PC-9 (cell line): ENCODE measurements at regions of chr9 and their contacts with region 1.

Region 1: DNA sequence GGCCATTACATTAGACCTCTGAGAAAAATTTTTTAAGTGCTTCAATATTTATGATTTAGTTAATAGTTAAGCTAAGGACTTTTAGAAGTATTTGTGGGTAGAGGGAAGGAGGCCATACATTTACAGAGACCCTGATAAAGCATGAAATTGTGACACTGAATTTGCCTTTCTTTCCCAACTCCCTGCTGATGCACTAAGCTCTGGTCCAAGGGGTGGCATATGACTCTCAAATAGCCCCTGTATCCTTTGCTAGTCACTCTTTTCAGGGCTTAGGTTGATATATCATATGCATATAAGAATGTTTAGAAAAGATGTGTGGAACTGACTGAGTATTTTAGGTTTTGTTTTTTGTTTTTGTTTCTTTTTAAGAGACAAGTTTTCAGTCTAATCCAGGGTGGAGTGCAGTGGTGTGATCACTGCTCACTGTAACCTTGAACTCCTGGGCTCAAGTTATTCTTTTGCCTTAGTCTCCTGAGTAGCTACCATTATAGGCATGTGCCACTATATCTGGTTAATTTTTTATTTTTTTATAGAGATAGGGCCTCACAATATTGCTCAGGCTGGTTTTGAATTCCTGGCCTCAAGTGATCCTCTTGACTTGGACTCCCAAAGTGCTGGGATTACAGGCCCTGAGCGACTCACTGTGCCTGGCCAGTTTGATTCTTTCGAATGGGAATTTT is 20.5 kb downstream of the KIAA1958 start:
- DNase-seq: no peak
- H3K4me3 ChIP-seq: no peak overlapping the region
- H3K27ac ChIP-seq: no peak overlapping the region
- H3K4me1 ChIP-seq: peaks cover 8% of the 10 kb centered on the region; the same call in 1 of the 2 replicates
- H3K27me3 ChIP-seq: no peaks in the 10 kb centered on the region
- CTCF ChIP-seq: no peak

Region 2: GRCh38 chr9:112694706-112695555 is 187.8 kb after region 1 on chr9:
- CTCF ChIA-PET with region 1: no interaction called
- POLR2A ChIA-PET with region 1: no interaction called
- intact Hi-C with region 1: no loop called
- DNase-seq: no peak
- H3K4me3 ChIP-seq: no peak overlapping the region
- H3K27ac ChIP-seq: no peak overlapping the region
- H3K4me1 ChIP-seq: no peaks in the 10 kb centered on the region
- H3K27me3 ChIP-seq: no peaks in the 10 kb centered on the region
- CTCF ChIP-seq: no peak

Region 3: DNA sequence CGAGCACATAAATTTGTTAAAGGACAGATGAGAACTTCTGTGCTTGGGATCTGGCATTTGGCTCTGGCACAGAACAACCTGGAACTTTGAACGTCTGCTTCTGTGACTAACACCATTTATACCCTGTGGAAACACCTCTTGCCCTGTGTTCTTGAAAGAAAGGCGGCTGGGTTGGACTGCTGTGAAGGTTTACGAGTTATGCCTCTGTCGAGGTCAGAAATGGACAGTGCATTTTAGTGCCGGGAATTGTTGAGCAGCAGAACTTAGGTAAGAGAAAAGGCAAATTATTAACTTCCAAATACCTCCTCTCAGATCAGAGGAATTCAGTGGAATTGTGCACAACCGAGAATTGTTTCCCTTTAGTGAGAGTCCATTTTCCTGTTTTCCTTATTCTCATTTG is 224.8 kb after region 1 on chr9:
- CTCF ChIA-PET with region 1: no interaction called
- POLR2A ChIA-PET with region 1: interaction called, 27 read pairs
- intact Hi-C with region 1: no loop called
- DNase-seq: no peak
- H3K4me3 ChIP-seq: no peak overlapping the region
- H3K27ac ChIP-seq: no peak overlapping the region
- H3K4me1 ChIP-seq: no peaks in the 10 kb centered on the region
- H3K27me3 ChIP-seq: no peaks in the 10 kb centered on the region
- CTCF ChIP-seq: no peak

Region 4: GRCh38 chr9:112762726-112763518 is 255.8 kb after region 1 on chr9:
- CTCF ChIA-PET with region 1: no interaction called
- POLR2A ChIA-PET with region 1: interaction called, 29 read pairs
- intact Hi-C with region 1: no loop called
- DNase-seq: no peak
- H3K4me3 ChIP-seq: no peak overlapping the region
- H3K27ac ChIP-seq: no peak overlapping the region
- H3K4me1 ChIP-seq: peaks cover 3% of the 10 kb centered on the region
- H3K27me3 ChIP-seq: no peaks in the 10 kb centered on the region
- CTCF ChIP-seq: no peak